PC-9 (cell line): ENCODE measurements at regions of chr2 and their contacts with region 1.

Region 1: DNA sequence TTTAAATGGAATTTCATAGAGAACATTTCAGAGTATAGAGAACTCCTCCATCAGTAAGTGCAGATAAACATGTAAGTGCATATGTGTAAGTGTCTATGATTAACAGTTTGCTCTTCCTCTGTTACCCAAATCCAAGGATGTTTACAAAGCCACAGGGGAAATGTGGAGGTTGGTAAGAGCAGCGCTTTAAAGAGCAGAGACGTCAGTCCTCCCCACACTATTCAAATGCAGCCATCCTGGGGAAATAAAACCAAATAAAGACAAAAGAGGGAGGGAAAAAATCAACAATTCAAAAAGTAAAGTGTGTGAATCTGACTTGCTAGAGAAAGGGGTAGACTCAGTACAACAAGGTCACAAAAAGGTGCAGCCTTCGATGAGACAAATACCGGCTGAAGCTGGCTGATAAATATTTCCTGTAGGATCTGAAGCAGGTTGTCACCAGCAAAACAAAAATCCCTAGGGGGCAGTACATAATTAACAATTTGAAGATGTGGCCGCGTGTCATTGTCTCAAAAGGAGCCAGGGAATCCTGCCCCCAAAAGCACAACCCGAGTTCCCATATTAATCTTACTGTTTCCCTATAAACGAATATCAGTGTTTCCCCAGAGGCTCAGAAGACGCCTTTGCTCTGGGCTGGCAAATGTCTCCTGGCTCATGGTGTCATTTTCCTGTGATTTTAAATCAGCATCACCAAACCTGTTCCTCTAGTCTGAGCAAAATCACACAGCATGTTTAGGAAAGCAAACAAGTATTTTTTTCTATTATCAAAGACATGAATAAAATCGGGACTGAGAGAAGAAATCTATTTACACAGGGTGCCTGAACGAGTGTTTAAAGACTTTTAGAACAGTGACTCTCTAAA is 216.6 kb downstream of the CDCA7 start:
- DNase-seq: peak; percentile 59 to 87
- H3K4me3 ChIP-seq: peak overlapping the region; percentile 22; the same call in 1 of the 2 replicates
- H3K27ac ChIP-seq: peak overlapping the region; percentile 58
- H3K4me1 ChIP-seq: peaks cover 30% of the 10 kb centered on the region
- H3K27me3 ChIP-seq: peaks cover 5% of the 10 kb centered on the region; the same call in 1 of the 2 replicates
- CTCF ChIP-seq: peak; percentile 75

Region 2: GRCh38 chr2:173590271-173590861 is 19.1 kb after region 1 on chr2:
- CTCF ChIA-PET with region 1: no interaction called
- POLR2A ChIA-PET with region 1: no interaction called
- intact Hi-C with region 1: loop called (anchors 2 kb)
- DNase-seq: peak; percentile 87 to 94
- H3K4me3 ChIP-seq: peak overlapping the region; percentile 41; the same call in 1 of the 2 replicates
- H3K27ac ChIP-seq: peak overlapping the region; percentile 72
- H3K4me1 ChIP-seq: peaks cover 32% of the 10 kb centered on the region
- H3K27me3 ChIP-seq: no peaks in the 10 kb centered on the region
- CTCF ChIP-seq: no peak

Region 3: GRCh38 chr2:173658946-173659371 is 87.7 kb after region 1 on chr2:
- CTCF ChIA-PET with region 1: interaction called, 11 read pairs
- POLR2A ChIA-PET with region 1: no interaction called
- intact Hi-C with region 1: no loop called
- DNase-seq: no peak
- H3K4me3 ChIP-seq: no peak overlapping the region
- H3K27ac ChIP-seq: no peak overlapping the region
- H3K4me1 ChIP-seq: no peaks in the 10 kb centered on the region
- H3K27me3 ChIP-seq: no peaks in the 10 kb centered on the region; the same call in 1 of the 2 replicates
- CTCF ChIP-seq: no peak

Region 4: DNA sequence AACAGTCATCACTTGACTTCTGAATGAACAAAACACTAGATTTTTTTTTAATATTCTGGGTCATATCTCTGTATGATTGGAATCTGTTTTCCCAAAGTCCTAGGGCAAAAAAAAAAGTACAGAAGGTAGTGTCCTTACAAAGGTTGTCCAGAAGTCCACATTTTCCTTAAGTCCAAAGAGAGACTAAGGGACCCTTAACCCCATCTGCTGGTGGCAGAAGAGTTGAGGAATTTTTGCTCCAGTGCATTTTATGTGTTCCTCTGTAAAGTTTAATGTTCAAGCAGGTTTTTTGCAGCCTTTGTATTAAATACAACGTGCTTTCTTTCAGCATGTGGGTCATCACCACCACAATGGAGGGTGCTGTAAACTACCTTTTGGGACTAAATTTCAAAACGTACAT is 178.1 kb after region 1 on chr2:
- CTCF ChIA-PET with region 1: no interaction called
- POLR2A ChIA-PET with region 1: no interaction called
- intact Hi-C with region 1: loop called (anchors 5 kb)
- DNase-seq: no peak
- H3K4me3 ChIP-seq: no peak overlapping the region
- H3K27ac ChIP-seq: no peak overlapping the region
- H3K4me1 ChIP-seq: no peaks in the 10 kb centered on the region
- H3K27me3 ChIP-seq: peaks cover 29% of the 10 kb centered on the region; the same call in 1 of the 2 replicates
- CTCF ChIP-seq: peak; percentile 65

Region 5: DNA sequence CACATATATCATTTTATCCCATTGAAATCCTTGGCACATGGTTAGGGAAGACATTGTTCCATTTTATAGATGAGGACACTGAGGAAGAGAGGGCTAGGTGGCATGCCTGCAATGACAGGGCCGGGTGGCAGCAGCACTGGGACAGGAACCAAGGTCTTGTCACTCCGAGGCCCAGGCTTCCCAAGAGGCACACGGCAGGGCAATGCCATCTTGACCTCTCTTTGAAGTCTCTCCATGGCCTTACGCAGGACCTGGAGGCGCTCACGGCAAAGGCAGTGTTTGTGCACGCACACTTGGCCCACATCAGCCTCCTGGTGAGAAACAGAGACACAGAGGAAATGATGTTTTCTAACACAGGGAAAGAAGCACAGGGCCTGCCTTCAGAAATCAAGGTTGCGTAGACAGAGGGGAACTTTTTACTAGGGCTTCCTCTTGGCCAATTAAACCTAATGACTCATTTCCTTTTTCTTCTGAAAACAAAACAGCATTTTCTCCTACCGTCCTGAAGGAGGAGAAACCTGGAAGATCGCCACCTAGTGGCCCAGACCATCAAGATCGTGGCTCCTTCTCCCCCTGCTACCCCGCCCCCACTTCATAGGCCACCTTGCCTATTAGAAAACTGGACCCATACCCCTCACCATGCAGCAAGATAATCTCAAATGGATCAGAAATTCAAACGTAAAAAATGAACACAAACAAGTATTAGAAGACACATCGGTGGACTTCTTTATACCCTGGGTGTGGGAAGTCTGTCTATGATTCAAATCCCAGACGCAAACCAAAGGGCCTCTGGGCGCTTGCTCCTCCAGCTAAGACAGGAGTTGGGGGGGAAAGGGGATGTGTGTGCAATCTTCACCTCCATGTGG is 468.5 kb after region 1 on chr2:
- CTCF ChIA-PET with region 1: no interaction called
- POLR2A ChIA-PET with region 1: no interaction called
- intact Hi-C with region 1: loop called (anchors 1 kb)
- DNase-seq: peak; percentile 90 to 94
- H3K4me3 ChIP-seq: no peak overlapping the region
- H3K27ac ChIP-seq: peak overlapping the region; percentile 43
- H3K4me1 ChIP-seq: peaks cover 5% of the 10 kb centered on the region
- H3K27me3 ChIP-seq: no peaks in the 10 kb centered on the region
- CTCF ChIP-seq: peak; percentile 98